ENCODE measurements at regions of chr3 and their contacts with region 1.

Region 1: GRCh38 chr3:179806177-179806576 is 153.3 kb downstream of the USP13 start:
- DNase-seq: no peak
- H3K4me3 ChIP-seq: no peak overlapping the region
- H3K27ac ChIP-seq: no peak overlapping the region
- H3K4me1 ChIP-seq: no peaks in the 10 kb centered on the region
- H3K27me3 ChIP-seq: no peaks in the 10 kb centered on the region
- CTCF ChIP-seq: no peak
- POLR2A ChIP-seq: no peak

Region 2: DNA sequence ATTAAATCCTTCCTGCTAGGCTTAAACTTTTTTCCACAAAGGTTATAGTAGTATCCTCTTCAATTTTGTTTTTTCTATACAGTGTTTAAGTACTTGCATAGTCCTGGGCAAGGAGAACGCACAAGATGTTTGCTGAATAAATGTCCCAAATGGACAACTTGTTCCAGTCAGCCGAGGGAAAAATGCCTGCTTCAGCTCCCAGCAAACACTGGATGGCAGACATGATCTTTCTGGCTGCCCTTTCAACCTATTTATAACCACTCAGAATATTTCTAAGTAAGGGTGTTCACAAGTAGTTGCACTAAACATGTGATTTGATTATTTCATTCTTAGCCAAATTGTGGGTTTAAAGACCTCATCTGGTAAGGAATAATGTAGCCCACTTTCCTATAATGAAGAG is 384.7 kb before region 1 on chr3:
- intact Hi-C with region 1: loop called (anchors 5 kb)
- DNase-seq: no peak
- H3K4me3 ChIP-seq: no peak overlapping the region
- H3K27ac ChIP-seq: no peak overlapping the region
- H3K4me1 ChIP-seq: no peaks in the 10 kb centered on the region
- H3K27me3 ChIP-seq: no peaks in the 10 kb centered on the region
- CTCF ChIP-seq: peak in 2 of 3 donors; percentile 23 to 42
- POLR2A ChIP-seq: no peak

Region 3: GRCh38 chr3:179956416-179956830 is 150.2 kb after region 1 on chr3:
- intact Hi-C with region 1: no loop called
- DNase-seq: no peak
- H3K4me3 ChIP-seq: no peak overlapping the region
- H3K27ac ChIP-seq: no peak overlapping the region
- H3K4me1 ChIP-seq: no peaks in the 10 kb centered on the region
- H3K27me3 ChIP-seq: no peaks in the 10 kb centered on the region
- CTCF ChIP-seq: no peak
- POLR2A ChIP-seq: no peak

Measured in breast epithelium (tissue), 4 donors.